BJ (cell line): ENCODE measurements at regions of chr12 and their contacts with region 1.

Region 1: DNA sequence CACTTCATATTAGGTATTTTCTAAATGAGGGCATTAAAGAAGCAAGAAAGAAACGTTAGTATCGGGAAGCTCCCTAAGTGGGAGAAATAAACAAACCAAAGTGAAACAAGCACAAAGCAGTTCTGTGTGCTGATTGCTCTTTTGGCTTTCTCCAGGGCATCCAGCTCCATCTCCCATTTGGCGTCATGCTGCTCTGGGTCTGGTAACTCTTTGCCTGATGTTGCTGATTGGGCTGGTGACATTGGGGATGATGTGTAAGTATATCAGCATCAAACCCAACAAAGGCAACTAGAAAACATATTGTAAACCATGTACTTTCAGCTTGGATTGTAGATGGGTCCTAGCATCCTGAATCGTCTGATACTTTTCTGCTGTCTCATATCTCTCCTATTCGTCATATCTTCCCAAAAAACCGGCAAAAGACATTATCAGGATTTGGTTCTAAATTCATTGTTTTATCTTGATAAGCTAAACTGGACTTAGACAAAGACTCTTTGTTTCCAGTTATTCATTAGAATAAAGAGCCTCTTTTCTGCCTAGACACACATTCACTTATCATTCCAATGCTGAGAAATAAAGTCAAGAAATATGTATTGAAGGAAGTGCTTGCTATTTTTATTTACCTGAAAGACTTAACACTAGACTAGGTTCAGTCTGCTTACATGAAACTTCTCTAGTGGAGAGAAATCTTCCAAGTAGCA is 2.4 kb downstream of the CLEC12B start:
- DNase-seq: no peak
- H3K4me3 ChIP-seq: no peak overlapping the region
- H3K27me3 ChIP-seq: no peaks in the 10 kb centered on the region
- CTCF ChIP-seq: no peak

Region 2: DNA sequence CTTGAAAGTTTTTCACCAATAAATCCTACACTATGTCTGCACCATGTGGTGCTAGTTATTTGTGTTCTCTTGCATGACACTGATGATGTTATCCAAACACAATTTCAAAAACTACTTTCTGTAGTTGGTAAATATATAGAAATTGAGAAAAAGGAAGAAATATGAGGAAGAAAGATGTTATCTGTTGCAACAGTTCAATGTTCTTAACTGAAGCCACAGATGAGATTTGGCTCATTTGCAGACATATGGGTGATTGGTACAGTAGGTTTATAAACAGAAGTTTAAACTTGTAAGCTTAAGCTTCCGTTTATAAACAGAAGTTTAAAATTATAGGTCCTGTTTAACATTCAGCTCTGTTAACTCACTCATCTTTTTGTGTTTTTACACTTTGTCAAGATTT is 41.6 kb before region 1 on chr12 and contains the start of gene CLEC12A:
- CTCF ChIA-PET with region 1: no interaction called
- POLR2A ChIA-PET with region 1: no interaction called
- DNase-seq: no peak
- H3K4me3 ChIP-seq: no peak within 1 kb of the TSS
- H3K27me3 ChIP-seq: 0 out of 2 replicates have a peak, but pooled peaks cover 2% of the 10 kb centered on the region
- CTCF ChIP-seq: no peak
- polyA plus RNA-seq, gene CLEC12A: not detected in 2 replicates

Region 3: DNA sequence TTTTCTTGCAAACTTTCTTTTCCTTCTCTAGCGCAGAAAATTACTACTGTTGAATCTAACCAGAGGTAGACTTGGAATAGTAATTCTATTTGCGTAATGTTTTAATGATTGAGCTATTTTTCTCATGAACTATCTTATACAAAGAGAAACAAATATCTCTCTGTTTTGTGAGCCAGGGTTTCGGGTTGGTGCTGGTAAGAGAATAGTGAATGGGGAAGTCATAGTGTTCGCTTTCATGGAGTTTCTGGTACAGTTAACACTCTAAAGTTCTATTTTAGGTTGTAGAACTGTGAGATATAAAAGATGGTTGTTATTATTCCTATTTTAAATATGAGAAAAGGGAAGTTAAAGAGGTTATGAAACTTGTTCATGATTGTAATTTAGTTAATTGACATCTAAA is 20.5 kb before region 1 on chr12:
- CTCF ChIA-PET with region 1: interaction called, 18 read pairs
- POLR2A ChIA-PET with region 1: no interaction called
- DNase-seq: no peak
- H3K4me3 ChIP-seq: no peak overlapping the region
- H3K27me3 ChIP-seq: peaks cover 1% of the 10 kb centered on the region; the same call in 1 of the 2 replicates
- CTCF ChIP-seq: no peak

Region 4: DNA sequence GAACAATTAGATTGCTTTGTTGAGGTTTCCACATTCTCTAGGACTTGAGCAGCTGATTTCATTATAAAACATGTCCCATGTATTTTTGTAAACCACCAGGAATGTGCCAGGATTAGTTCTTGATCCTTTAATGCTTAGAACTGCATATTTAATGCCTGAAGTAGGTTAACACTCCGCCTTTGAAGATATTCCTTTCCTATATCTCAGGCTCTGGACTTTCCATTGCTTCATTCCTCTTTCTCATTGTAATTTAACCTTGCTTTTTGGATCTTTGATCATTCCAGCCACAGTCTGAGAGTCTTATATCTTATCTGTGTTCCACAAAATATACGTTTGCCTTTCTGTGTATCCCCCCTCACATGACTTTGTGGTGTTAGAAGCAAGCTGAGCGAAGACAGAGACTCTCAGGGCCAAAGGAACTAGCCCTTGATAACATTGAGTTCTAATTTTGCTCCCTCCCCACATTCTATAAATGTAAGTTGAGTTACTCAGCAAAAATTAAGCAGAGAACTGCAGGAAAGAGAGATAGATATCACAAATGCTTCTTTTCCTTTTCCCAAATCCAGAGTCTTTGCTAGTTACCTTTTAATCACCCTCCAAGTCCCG is 11.5 kb before region 1 on chr12:
- CTCF ChIA-PET with region 1: interaction called, 18 read pairs
- POLR2A ChIA-PET with region 1: no interaction called
- DNase-seq: no peak
- H3K4me3 ChIP-seq: no peak overlapping the region
- H3K27me3 ChIP-seq: peaks cover 4% of the 10 kb centered on the region; the same call in 1 of the 2 replicates
- CTCF ChIP-seq: no peak